ENCODE measurements at regions of chr7 and their contacts with region 1.

Region 1: GRCh38 chr7:30284298-30285066 is at the start of gene ZNRF2:
- DNase-seq: peak; percentile 100
- H3K4me3 Mint-ChIP-seq: peak within 1 kb of the TSS; percentile 88
- H3K27ac Mint-ChIP-seq: peak within 1 kb of the TSS; percentile 92
- H3K4me1 Mint-ChIP-seq: peaks cover 43% of the 10 kb centered on the region
- H3K27me3 Mint-ChIP-seq: no peaks in the 10 kb centered on the region
- total RNA-seq, gene ZNRF2: 8.8 and 9.2 TPM in 2 replicates

Region 2: DNA sequence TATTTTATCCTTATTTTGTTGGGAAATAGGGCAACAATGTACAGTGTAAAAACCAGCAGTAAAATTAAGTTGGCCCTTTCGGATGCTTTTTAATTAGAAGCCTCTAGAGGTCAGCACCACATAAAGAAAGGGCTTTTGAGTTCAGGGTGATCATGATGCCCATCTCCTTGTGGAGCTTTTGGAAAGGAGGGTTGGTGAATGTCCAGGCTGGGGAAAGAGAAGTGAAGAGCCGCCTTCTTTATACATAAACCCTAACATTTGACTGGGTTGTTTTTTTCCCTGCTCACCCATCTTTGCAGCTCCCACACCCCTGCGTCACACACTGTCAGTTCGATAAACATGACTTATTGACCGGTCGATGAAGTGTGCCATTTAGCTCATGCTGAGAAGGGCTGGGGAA is 119.9 kb before region 1 on chr7:
- intact Hi-C with region 1: loop called (anchors 5 kb)
- DNase-seq: no peak
- H3K4me3 Mint-ChIP-seq: no peak overlapping the region
- H3K27ac Mint-ChIP-seq: no peak overlapping the region
- H3K4me1 Mint-ChIP-seq: peaks cover 35% of the 10 kb centered on the region
- H3K27me3 Mint-ChIP-seq: no peaks in the 10 kb centered on the region

Region 3: DNA sequence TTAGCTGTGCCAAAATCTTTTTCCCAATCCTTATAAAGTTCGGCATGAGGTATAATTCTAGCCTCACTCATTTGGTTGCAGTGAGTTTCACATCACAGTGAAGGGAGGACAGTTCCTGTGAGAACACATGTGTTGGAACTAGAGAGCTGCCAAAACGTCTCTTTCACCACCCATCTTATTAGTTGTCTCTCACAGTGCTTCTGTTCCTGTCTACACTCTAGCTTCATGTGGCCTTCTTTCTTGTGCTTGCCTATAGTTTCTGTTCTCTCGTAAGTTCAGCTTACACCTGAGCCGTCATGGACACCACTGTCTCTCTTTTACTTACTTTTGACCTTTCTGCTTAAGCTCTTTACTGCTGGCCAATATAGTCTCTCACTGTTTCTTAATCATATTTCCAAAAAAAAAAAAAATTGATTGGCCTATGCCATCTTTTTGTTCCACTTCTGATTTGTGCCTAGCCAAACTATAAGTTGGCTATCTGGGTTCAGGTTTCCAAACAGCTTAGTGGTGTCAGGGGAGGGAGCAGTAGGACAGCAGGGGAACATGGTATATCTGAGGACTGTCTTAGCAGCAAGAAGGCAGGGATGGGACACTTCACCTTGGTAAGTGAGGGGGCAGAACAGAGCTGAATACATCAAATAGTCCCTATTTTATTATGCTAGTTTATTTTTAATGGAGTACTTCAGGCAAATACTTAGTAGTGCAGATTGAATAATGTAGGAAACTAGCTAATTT is 38.0 kb after region 1 on chr7:
- intact Hi-C with region 1: loop called (anchors 1 kb)
- DNase-seq: peak; percentile 79
- H3K4me3 Mint-ChIP-seq: peak overlapping the region; percentile 78
- H3K27ac Mint-ChIP-seq: peak overlapping the region; percentile 96
- H3K4me1 Mint-ChIP-seq: peaks cover 42% of the 10 kb centered on the region
- H3K27me3 Mint-ChIP-seq: no peaks in the 10 kb centered on the region

Region 4: DNA sequence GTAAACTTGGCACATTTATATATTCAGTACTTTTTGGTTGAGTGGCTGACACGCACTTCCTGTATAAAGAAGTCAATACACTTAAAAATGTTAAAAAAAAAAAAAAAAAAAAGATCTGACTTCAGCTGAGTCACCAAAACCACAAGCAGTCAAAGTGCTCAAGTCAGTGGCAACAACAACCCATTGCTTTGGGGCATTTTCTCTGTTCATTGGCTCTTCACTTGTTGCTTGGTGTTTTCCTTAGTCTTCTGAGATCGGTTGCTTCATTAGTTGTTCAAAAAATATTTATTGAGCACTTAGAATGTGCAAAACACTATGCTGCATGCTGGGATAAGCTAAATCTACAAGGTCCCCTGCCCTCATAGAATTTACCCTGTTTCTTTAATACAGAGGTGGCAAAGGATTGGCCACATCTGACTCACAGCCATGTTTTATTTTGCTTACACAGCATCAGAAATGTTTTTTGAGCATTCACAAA is 63.6 kb after region 1 on chr7:
- intact Hi-C with region 1: loop called (anchors 1 kb)
- DNase-seq: peak; percentile 87
- H3K4me3 Mint-ChIP-seq: peak overlapping the region; percentile 67
- H3K27ac Mint-ChIP-seq: peak overlapping the region; percentile 89
- H3K4me1 Mint-ChIP-seq: peaks cover 54% of the 10 kb centered on the region
- H3K27me3 Mint-ChIP-seq: no peaks in the 10 kb centered on the region

Region 5: DNA sequence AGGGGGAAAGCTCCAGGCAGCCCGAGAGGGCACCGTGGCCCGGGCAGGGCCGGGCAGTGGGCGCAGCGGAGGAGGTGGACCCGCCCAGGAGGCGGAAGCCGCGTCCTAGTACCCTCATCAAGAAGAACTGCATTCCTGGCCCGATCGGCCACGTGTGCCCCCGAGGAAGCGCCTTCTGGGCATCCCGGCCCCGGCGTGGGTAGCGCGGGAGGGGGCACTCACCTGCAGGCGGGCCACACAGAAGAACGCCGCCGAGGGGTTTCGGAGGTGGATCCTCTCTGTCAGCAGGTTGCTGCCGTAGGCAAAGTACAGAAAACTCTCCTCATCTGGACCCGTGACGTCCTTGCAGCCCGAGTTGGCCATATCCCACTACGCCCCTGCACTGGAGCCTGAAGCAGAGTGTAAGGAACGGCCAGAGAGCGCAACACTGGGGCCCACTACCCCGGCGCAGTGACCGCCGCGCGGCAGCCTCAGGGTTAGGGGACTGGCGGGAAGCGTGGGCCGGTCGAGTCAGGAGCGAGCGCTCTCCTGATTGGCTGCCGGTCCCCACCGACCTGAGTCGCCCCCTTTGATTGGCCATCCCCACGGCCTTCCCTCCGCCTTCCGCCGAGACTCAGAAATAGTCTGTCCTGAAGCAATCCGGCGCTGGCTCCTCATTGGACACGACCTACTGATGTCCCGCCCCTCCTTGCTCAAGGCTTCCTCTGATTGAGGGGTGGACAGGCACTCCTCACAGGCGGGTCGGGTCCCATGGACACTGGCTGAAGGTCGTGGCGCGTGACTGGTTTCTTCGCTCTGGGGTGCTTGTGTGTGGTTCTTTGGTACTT is 220.1 kb after region 1 on chr7 and contains the start of gene GGCT:
- intact Hi-C with region 1: loop called (anchors 1 kb)
- DNase-seq: peak; percentile 99
- H3K4me3 Mint-ChIP-seq: peak within 1 kb of the TSS; percentile 87
- H3K27ac Mint-ChIP-seq: peak within 1 kb of the TSS; percentile 84
- H3K4me1 Mint-ChIP-seq: peaks cover 44% of the 10 kb centered on the region
- H3K27me3 Mint-ChIP-seq: no peaks in the 10 kb centered on the region
- total RNA-seq, gene GGCT: 76.1 and 80.3 TPM in 2 replicates

Measured in activated CD4-positive, alpha-beta T cell treated with anti-CD3 and anti-CD28 coated beads, Interleukin-2, amount 10 ng/mL, durations not matched to agents 24 days and 14 days (primary cell).